ENCODE measurements at regions of chr12 and their contacts with region 1.

Region 1: DNA sequence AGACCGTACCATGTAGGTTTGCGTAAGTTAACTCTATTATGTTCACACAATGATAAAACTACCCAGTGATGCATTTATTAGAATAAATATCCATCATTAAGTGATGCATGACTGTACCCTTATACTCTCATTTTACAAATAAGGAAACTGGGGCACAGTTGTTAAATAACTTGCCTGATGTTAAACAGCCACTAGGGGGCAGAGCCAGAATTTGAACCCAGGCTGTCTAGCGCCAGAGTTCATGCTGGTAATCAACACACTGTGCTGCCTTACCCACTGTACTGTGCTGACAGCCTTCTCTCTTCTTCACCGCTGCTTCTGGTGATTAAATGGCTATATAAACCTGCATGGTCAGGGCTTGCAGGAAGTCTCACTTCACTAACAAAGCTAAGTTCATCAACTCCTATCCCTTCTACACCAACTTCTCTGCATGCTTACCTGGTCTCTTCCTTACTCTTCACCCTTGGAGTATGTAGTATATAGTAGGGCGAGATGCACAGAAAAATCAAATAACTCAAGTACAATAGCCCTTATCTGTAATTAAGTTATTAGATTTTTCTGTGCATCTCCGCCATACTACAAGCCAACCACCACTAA is 43.6 kb upstream of the APPL2 start:
- DNase-seq: peak; percentile 35
- CTCF ChIP-seq: peak; percentile 67

Region 2: GRCh38 chr12:104886418-104887401 is 392.8 kb before region 1 on chr12:
- in situ Hi-C with region 1: no loop called
- DNase-seq: no peak
- CTCF ChIP-seq: no peak

Region 3: GRCh38 chr12:105382771-105383622 is 103.4 kb after region 1 on chr12:
- in situ Hi-C with region 1: loop called (anchors 10 kb)
- DNase-seq: peak; percentile 78
- CTCF ChIP-seq: peak; percentile 59